Activated T-helper 2 cell treated with anti-CD3 and anti-CD28 coated beads, Interferon-gamma antibody, Interleukin-2, Interleukin-4, amounts not matched to agents 10 μg/mL and 5 μg/mL and 100 μg/mL, durations not matched to agents 14 hours and 24 hours and 36 hours (primary cell): ENCODE measurements at regions of chr3 and their contacts with region 1.

Region 1: DNA sequence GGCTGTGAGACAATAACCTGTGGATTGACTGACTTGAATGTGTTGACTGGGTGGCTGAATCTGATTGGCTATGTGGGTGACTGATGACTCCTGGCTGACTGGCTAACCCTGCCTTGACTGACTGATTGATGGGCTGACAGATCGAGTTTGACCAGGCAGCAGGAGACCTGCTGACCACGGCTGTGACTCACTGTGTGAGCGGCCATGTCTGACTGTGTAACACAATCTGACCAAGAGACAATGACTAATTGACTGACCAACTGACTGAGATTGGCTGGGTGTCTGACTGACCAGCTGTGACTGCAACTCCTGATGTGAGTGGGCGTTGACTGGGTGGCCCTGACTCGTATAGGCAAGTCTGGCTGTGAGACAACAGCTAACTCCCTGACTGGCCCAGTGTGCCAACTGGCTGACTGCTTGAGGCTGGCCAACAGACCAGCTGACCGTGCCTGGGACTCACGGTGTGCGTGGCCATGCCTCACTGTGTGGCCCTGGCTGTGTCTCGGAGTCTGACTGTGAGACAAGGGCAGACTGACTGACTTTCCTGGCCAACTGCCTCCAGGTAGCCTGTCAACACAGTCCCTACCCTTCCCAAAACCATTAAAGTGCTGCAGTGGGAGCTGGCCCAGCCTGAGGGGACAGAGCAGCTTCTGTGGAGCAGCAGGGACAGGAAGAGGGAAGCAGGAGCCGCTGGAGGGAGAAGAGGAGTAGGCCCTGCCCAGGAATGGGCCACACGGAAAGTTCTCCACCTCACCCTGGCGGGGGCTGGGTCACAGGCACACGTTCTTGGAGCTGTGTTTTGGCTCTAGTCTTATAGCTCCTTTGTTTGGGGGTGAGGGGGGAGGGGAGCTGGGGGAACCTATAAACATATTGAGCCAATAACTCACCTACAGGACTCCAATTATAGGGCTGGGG is 508.9 kb downstream of the SHQ1 start:
- DNase-seq: no peak
- H3K4me3 Mint-ChIP-seq: no peak overlapping the region
- H3K27ac Mint-ChIP-seq: no peak overlapping the region
- H3K4me1 Mint-ChIP-seq: peaks cover 29% of the 10 kb centered on the region
- H3K27me3 Mint-ChIP-seq: no peaks in the 10 kb centered on the region

Region 2: GRCh38 chr3:72259755-72260587 is 79.4 kb before region 1 on chr3:
- intact Hi-C with region 1: loop called (anchors 2 kb)
- DNase-seq: no peak
- H3K4me3 Mint-ChIP-seq: no peak overlapping the region
- H3K27ac Mint-ChIP-seq: peak overlapping the region; percentile 13
- H3K4me1 Mint-ChIP-seq: peaks cover 20% of the 10 kb centered on the region
- H3K27me3 Mint-ChIP-seq: no peaks in the 10 kb centered on the region